ENCODE measurements at regions of chr6 and their contacts with region 1.

Region 1: GRCh38 chr6:79335133-79335674 is 100.7 kb upstream of the HMGN3 start:
- DNase-seq: peak; percentile 85
- ATAC-seq: peak; percentile 94
- H3K4me3 ChIP-seq: no peak overlapping the region
- H3K27ac ChIP-seq: peak overlapping the region; percentile 38
- H3K4me1 ChIP-seq: peaks cover 6% of the 10 kb centered on the region; the same call in 1 of the 2 replicates
- H3K27me3 ChIP-seq: no peaks in the 10 kb centered on the region
- CTCF ChIP-seq: no peak
- EP300 ChIP-seq: peak; percentile 67 to 84
- POLR2A ChIP-seq: no peak
- RAD21 ChIP-seq: peak; percentile 18; the same call in 1 of the 2 replicates

Region 2: DNA sequence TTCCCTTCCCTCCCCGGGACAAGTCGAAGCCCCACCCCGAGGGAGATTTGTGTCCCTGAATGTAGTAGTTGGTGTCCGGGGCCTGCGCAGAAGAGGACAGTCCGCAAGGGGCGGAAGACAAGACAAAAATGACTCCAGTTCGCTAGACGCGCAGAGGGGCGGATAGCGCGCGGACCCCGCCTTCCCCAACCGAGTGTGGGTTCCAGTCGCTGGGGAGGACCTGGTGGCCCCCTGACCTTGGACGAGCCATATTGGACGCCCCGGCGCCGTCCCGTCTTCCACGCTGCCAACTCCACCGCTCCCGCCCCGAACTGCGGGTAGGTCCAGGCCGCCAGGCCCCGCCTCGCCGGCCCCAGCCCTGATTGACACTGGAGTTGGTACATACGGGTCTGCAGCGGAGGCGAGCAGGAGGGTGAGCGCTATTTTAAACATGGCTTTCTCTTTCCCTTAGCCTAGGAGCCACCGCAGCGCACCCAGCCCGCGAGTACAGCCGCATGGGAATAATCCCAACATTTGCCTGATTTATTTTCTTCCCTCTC is 101.5 kb before region 1 on chr6:
- CTCF ChIA-PET with region 1: interaction called, 4 read pairs
- POLR2A ChIA-PET with region 1: interaction called, 4 read pairs
- RAD21 ChIA-PET with region 1: interaction called, 4 read pairs
- SMC1A ChIA-PET with region 1: interaction called, 30 read pairs
- in situ Hi-C with region 1: loop called (anchors 5 kb)
- intact Hi-C with region 1: loop called (anchors 5 kb)
- DNase-seq: peak; percentile 51
- ATAC-seq: peak; percentile 87
- H3K4me3 ChIP-seq: peak overlapping the region; percentile 79
- H3K27ac ChIP-seq: peak overlapping the region; percentile 95
- H3K4me1 ChIP-seq: 0 out of 2 replicates have a peak, but pooled peaks cover 5% of the 10 kb centered on the region
- H3K27me3 ChIP-seq: no peaks in the 10 kb centered on the region
- CTCF ChIP-seq: peak in 1 of 3 experiments; percentile 48; a peak in 2 of 6 replicates
- EP300 ChIP-seq: no peak
- POLR2A ChIP-seq: peak; percentile 88
- RAD21 ChIP-seq: no peak

Region 3: DNA sequence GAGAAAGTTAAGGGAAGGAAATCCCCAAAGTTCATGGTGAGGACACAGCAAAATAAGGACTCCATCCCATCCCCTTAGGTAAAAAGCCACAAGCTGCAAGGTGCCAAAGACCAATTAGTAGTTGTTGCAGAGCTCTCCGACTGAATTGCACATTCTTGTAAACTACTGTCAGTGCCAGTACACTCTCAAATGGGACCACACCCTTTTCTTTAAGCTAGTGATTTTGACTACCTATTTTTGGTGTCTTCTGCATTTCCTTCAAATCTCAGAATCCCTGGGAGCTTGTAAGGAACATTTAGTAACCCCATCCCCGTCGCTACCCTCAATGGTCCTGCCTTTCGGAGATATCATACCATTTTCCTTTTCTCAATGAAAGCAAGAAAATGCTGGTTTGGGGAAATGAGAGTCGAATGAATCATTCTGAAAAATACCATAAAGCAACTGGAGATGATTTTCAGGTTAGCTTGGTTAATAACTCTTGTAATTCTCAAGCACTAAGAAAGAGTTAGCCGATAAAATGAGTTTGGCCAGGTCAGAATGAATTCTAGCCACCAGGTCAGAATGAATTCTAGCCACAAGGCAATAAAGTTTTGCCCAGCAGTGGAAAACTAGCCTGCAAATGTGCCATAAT is 95.6 kb before region 1 on chr6:
- CTCF ChIA-PET with region 1: interaction called, 4 read pairs
- POLR2A ChIA-PET with region 1: interaction called, 7 read pairs
- RAD21 ChIA-PET with region 1: interaction called, 14 read pairs
- SMC1A ChIA-PET with region 1: interaction called, 30 read pairs
- in situ Hi-C with region 1: loop called (anchors 5 kb)
- intact Hi-C with region 1: loop called (anchors 5 kb)
- DNase-seq: peak; percentile 55
- ATAC-seq: peak; percentile 84
- H3K4me3 ChIP-seq: peak overlapping the region; percentile 8; the same call in 1 of the 2 replicates
- H3K27ac ChIP-seq: no peak overlapping the region
- H3K4me1 ChIP-seq: peaks cover 26% of the 10 kb centered on the region
- H3K27me3 ChIP-seq: no peaks in the 10 kb centered on the region
- CTCF ChIP-seq: no peak
- EP300 ChIP-seq: peak in 1 of 2 experiments; percentile 91; a peak in 2 of 4 replicates
- POLR2A ChIP-seq: no peak
- RAD21 ChIP-seq: no peak

Region 4: DNA sequence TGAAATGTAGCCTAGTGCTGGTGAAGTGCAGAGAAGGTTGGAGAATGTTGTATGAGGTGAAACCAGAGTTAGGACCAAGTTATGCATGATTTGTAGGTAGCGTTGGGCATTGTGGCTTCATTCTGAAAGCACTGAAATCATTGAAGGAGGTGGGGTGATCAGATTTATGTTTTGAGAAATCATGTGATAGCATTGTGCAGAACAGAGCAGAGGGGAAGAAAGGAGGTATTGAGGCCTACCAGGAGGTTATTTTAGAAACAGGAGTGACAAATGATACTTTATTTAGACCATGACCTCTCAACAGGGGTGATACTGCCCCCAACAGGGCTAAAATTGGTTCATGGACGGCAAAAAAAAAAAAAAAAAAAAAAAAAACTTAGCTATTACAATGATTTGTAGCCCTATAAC is 85.1 kb before region 1 on chr6:
- CTCF ChIA-PET with region 1: interaction called, 5 read pairs
- POLR2A ChIA-PET with region 1: no interaction called
- RAD21 ChIA-PET with region 1: interaction called, 5 read pairs
- SMC1A ChIA-PET with region 1: interaction called, 8 read pairs
- in situ Hi-C with region 1: no loop called
- intact Hi-C with region 1: loop called (anchors 2 kb)
- DNase-seq: peak; percentile 51
- ATAC-seq: peak; percentile 84
- H3K4me3 ChIP-seq: no peak overlapping the region
- H3K27ac ChIP-seq: no peak overlapping the region
- H3K4me1 ChIP-seq: peaks cover 13% of the 10 kb centered on the region
- H3K27me3 ChIP-seq: no peaks in the 10 kb centered on the region
- CTCF ChIP-seq: peak; percentile 32 to 50 (median 49); a peak in 4 of 6 replicates
- EP300 ChIP-seq: 0 out of 4 replicates have a peak, but pooled peaks of 1 of the 2 experiments have one; percentile 19
- POLR2A ChIP-seq: no peak
- RAD21 ChIP-seq: peak; percentile 63

Region 5: DNA sequence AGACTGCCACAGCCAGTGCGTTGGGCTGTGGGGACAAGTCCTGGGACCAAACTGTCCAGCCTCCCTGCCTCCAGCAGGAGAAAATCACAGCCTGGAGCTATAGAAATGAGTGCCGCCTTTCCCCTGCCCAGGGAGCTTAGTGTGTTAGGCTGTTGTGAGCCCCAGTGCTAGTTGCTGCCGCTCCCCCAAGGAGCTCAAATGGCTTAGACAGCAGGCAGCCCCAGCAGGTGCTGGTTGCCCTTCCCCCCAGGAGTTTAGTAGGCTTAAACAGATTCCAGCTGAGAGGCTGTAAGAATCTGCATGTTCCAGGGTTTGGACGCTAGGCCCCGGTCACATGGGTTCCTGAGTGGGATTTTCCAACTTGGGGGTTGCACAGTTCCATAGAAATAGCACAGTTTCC is 73.5 kb before region 1 on chr6:
- CTCF ChIA-PET with region 1: no interaction called
- POLR2A ChIA-PET with region 1: no interaction called
- RAD21 ChIA-PET with region 1: no interaction called
- SMC1A ChIA-PET with region 1: no interaction called
- in situ Hi-C with region 1: no loop called
- intact Hi-C with region 1: no loop called
- DNase-seq: no peak
- ATAC-seq: no peak
- H3K4me3 ChIP-seq: no peak overlapping the region
- H3K27ac ChIP-seq: no peak overlapping the region
- H3K4me1 ChIP-seq: no peaks in the 10 kb centered on the region
- H3K27me3 ChIP-seq: no peaks in the 10 kb centered on the region
- CTCF ChIP-seq: no peak
- EP300 ChIP-seq: no peak
- POLR2A ChIP-seq: no peak
- RAD21 ChIP-seq: no peak

Region 6: DNA sequence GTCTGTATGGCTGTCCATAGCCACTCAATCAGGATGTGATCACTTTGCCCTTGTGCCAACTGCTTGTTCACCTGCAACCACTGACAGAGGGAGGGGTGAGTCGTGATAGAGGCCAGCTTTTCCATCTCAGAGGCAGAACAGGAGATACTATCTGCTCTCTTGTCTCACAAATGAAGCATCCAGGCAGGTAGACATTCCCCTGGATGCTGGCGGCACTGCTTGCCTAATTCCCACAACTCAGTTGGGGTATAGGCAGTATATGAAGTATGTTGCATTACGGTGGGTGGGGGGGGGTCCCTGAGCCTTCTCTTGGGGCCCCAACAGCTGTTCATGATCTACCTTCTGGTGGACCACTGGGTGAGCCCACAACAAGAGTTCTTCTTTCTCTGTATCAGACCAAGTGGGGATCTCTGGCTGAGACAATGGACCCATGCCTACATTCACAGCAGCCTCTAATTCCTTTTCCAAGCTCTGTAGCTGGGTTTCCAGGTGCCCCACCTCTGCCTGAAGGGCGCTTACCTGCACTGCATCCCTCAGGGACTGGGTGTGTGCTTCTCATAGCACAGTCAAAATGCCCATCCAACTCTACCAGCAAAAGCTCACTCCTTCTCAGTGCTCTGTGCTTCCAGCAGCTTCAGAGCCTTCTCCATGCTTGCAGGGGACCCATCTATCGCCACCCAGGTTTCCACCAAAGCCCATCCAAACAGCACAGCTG is 22.6 kb before region 1 on chr6:
- CTCF ChIA-PET with region 1: no interaction called
- POLR2A ChIA-PET with region 1: no interaction called
- RAD21 ChIA-PET with region 1: no interaction called
- SMC1A ChIA-PET with region 1: no interaction called
- in situ Hi-C with region 1: no loop called
- intact Hi-C with region 1: no loop called
- DNase-seq: no peak
- ATAC-seq: no peak
- H3K4me3 ChIP-seq: no peak overlapping the region
- H3K27ac ChIP-seq: no peak overlapping the region
- H3K4me1 ChIP-seq: no peaks in the 10 kb centered on the region
- H3K27me3 ChIP-seq: no peaks in the 10 kb centered on the region
- CTCF ChIP-seq: no peak
- EP300 ChIP-seq: no peak
- POLR2A ChIP-seq: no peak
- RAD21 ChIP-seq: no peak

Region 7: GRCh38 chr6:79461205-79461604 is 126.0 kb after region 1 on chr6:
- CTCF ChIA-PET with region 1: interaction called, 3 read pairs
- POLR2A ChIA-PET with region 1: no interaction called
- RAD21 ChIA-PET with region 1: interaction called, 3 read pairs
- SMC1A ChIA-PET with region 1: interaction called, 3 read pairs
- in situ Hi-C with region 1: no loop called
- intact Hi-C with region 1: loop called (anchors 5 kb)
- DNase-seq: no peak
- ATAC-seq: peak; percentile 88
- H3K4me3 ChIP-seq: no peak overlapping the region
- H3K27ac ChIP-seq: no peak overlapping the region
- H3K4me1 ChIP-seq: no peaks in the 10 kb centered on the region
- H3K27me3 ChIP-seq: no peaks in the 10 kb centered on the region
- CTCF ChIP-seq: no peak
- EP300 ChIP-seq: no peak
- POLR2A ChIP-seq: no peak
- RAD21 ChIP-seq: no peak

Region 8: DNA sequence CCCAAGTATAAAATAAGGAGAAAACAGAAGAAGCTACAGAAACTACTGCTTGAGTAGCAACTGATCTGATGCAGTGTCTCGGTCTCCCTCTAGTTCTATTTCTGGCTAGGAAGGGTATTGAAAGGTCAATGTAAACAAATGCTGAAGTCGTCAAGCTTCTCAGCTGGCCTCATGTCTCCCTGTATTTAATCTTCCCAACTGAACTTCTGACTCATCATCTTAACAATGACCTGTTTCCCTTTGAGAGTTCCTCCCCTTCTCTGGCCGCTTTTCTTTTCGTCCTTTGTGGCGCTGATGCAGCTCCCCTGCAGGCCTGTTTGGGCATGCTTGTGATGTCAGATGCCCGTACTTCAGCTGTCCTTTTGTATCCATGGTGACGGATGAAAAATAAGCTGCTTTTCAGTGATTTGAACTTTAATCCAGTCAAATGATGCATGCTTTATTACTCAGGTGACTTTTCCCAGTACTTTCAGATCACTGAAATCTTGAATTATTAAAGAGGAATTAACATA is 209.8 kb after region 1 on chr6:
- CTCF ChIA-PET with region 1: no interaction called
- POLR2A ChIA-PET with region 1: no interaction called
- RAD21 ChIA-PET with region 1: interaction called, 3 read pairs
- SMC1A ChIA-PET with region 1: interaction called, 5 read pairs
- in situ Hi-C with region 1: no loop called
- intact Hi-C with region 1: loop called (anchors 5 kb)
- DNase-seq: peak; percentile 74
- ATAC-seq: peak; percentile 91
- H3K4me3 ChIP-seq: peak overlapping the region; percentile 26; the same call in 1 of the 2 replicates
- H3K27ac ChIP-seq: peak overlapping the region; percentile 75
- H3K4me1 ChIP-seq: peaks cover 21% of the 10 kb centered on the region
- H3K27me3 ChIP-seq: no peaks in the 10 kb centered on the region
- CTCF ChIP-seq: peak; percentile 34 to 56 (median 56)
- EP300 ChIP-seq: peak; percentile 72 to 89; a peak in 3 of 4 replicates
- POLR2A ChIP-seq: no peak
- RAD21 ChIP-seq: peak; percentile 49

Region 9: GRCh38 chr6:79604583-79605037 is 269.4 kb after region 1 on chr6:
- CTCF ChIA-PET with region 1: no interaction called
- POLR2A ChIA-PET with region 1: no interaction called
- RAD21 ChIA-PET with region 1: no interaction called
- SMC1A ChIA-PET with region 1: no interaction called
- in situ Hi-C with region 1: no loop called
- intact Hi-C with region 1: no loop called
- DNase-seq: no peak
- ATAC-seq: no peak
- H3K4me3 ChIP-seq: no peak overlapping the region
- H3K27ac ChIP-seq: no peak overlapping the region
- H3K4me1 ChIP-seq: no peaks in the 10 kb centered on the region
- H3K27me3 ChIP-seq: no peaks in the 10 kb centered on the region; a peak in 1 of 4 replicates
- CTCF ChIP-seq: no peak
- EP300 ChIP-seq: no peak
- POLR2A ChIP-seq: no peak
- RAD21 ChIP-seq: no peak